ENCODE measurements at regions of chr2 and their contacts with region 1.

Region 1: DNA sequence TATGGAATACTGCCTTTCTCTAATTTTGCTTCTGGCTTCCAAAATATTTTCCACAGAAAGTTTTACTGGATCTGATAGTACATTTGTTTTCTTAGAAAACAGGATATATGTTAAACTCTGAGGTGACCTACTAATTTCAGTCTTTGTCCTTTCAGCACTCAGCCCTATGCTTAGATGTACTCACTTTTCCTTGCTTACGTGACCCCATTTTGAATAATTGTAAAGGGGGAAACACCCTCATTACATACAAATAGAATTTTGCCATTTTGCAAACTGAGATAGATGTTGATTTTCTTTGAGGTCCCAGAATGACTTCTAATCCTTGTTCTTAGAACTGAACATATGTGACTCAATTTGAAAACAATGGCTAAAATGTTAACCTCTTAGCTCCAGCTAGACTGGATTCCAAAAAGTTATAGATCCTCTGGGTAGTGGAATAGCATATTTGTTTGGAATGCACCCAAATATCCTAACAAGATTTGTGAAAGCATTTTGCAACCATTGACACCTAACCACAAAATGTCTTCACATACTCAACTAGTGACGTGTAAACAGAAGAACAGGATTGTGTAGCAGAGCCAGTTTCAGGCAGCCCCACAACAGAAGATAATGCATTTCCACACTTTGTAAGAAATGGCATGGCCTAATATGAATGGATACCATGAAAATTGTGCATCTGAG is 44.8 kb upstream of the EHBP1 start:
- DNase-seq: no peak
- H3K4me3 ChIP-seq: no peak overlapping the region
- H3K27me3 ChIP-seq: no peaks in the 10 kb centered on the region
- CTCF ChIP-seq: no peak

Region 2: GRCh38 chr2:62672601-62673000 is 11.9 kb after region 1 on chr2:
- CTCF ChIA-PET with region 1: no interaction called
- POLR2A ChIA-PET with region 1: interaction called, 13 read pairs
- DNase-seq: no peak
- H3K4me3 ChIP-seq: no peak overlapping the region
- H3K27me3 ChIP-seq: no peaks in the 10 kb centered on the region
- CTCF ChIP-seq: no peak

Region 3: DNA sequence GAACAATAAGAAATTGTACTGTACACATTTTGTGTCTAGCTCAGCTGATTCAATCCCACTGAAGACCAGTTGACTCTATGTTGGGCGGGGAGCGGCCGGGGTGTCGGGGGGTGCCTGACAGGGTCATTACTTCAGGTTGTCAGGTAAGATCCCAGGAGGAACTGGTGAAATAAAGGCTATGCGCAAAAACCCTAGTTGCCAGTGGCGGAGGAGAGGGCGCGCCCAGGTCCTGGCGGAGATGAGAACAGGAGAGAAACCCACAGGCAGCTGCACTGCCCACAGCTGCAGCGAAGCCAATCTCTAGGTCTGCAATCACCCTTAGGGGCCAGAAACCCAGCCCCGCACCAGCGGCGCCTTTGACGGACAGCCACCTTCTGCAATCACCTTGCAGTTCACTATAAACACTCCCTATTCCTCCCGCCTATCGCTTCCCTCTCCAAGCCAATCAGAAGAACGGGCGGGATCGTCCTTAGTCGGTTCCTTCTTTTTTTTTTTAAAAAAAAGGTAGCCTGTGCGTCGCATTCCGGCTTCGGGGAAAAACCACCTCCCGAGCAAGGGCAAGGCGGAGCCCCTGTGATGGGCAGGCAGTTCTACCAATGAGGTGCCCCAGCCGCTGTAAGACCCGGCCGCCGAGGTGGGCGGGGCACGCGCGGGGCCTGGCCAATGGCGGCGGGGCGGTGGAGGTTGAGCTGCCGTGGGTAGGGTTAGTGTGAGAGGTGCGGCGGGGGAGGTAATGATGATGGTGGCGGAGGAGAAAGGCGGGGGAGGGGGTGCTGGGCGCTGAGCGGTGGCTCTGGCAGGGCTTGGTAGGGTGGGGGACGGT is 44.5 kb after region 1 on chr2 and contains the start of gene EHBP1:
- CTCF ChIA-PET with region 1: interaction called, 3 read pairs
- POLR2A ChIA-PET with region 1: interaction called, 18 read pairs
- DNase-seq: peak; percentile 99
- H3K4me3 ChIP-seq: peak within 1 kb of the TSS; percentile 71
- H3K27me3 ChIP-seq: no peaks in the 10 kb centered on the region
- CTCF ChIP-seq: no peak
- polyA plus RNA-seq, gene EHBP1: 43.8 and 61.5 TPM in 2 replicates

Measured in BJ (cell line).